H1 (cell line): ENCODE measurements at regions of chr6 and their contacts with region 1.

Region 1: DNA sequence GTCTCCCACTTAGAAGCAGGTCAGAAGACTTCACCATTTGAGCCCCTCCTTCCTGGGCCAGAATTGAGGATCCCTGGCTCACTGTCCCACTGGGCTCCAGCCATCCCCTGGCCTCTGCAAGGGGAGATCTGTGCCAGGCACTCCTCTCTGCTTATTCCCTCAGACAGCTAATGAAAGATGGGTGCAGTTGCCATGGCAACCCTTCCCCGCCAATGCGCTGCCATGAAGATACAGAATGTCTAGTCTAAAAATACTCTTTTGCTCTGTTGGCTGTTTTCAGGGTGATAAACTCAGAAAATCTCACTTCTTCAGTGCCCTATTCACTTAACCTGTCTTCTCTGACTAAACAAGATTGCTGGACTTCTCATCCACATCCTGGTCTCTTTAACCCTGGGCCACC is 13.6 kb upstream of the TTLL2 start:
- DNase-seq: no peak
- H3K4me3 ChIP-seq: no peak overlapping the region
- H3K27ac ChIP-seq: no peak overlapping the region
- H3K4me1 ChIP-seq: peaks cover 7 to 19% (median 11%) of the 10 kb centered on the region in 4 experiments
- H3K27me3 ChIP-seq: no peaks in the 10 kb centered on the region; a peak in 1 of 7 replicates
- CTCF ChIP-seq: no peak
- EP300 ChIP-seq: no peak
- POLR2A ChIP-seq: no peak
- RAD21 ChIP-seq: no peak

Region 2: GRCh38 chr6:167212713-167213005 is 98.6 kb before region 1 on chr6:
- CTCF ChIA-PET with region 1: no interaction called
- POLR2A ChIA-PET with region 1: no interaction called
- DNase-seq: no peak
- H3K4me3 ChIP-seq: no peak overlapping the region
- H3K27ac ChIP-seq: no peak overlapping the region
- H3K4me1 ChIP-seq: peaks cover 0 to 2% (median 1%) of the 10 kb centered on the region in 4 experiments; a peak in 4 of 7 replicates
- H3K27me3 ChIP-seq: no peaks in the 10 kb centered on the region; a peak in 1 of 7 replicates
- CTCF ChIP-seq: no peak
- EP300 ChIP-seq: no peak
- POLR2A ChIP-seq: no peak
- RAD21 ChIP-seq: no peak

Region 3: GRCh38 chr6:167329014-167329413 is 17.7 kb after region 1 on chr6:
- CTCF ChIA-PET with region 1: interaction called, 10 read pairs
- POLR2A ChIA-PET with region 1: no interaction called
- DNase-seq: no peak
- H3K4me3 ChIP-seq: no peak overlapping the region
- H3K27ac ChIP-seq: no peak overlapping the region
- H3K4me1 ChIP-seq: no peaks in the 10 kb centered on the region; a peak in 1 of 7 replicates
- H3K27me3 ChIP-seq: no peaks in the 10 kb centered on the region
- CTCF ChIP-seq: peak; percentile 25 to 37 (median 35); a peak in 3 of 4 replicates
- EP300 ChIP-seq: no peak
- POLR2A ChIP-seq: no peak
- RAD21 ChIP-seq: peak; percentile 28 to 43